Esophagus muscularis mucosa (tissue), 4 donors: ENCODE measurements at regions of chr11 and their contacts with region 1.

Region 1: GRCh38 chr11:3834664-3835461 is 5.9 kb downstream of the RHOG start:
- DNase-seq: no peak
- H3K4me3 ChIP-seq: no peak overlapping the region
- H3K27ac ChIP-seq: peak overlapping the region in 3 of 4 donors; percentile 2 to 48 (median 35)
- H3K4me1 ChIP-seq: peaks cover 77 to 91% (median 89%) of the 10 kb centered on the region in 4 donors
- H3K27me3 ChIP-seq: no peaks in the 10 kb centered on the region
- CTCF ChIP-seq: no peak
- EP300 ChIP-seq: no peak
- POLR2A ChIP-seq: no peak

Region 2: GRCh38 chr11:3797329-3798095 is 37.4 kb before region 1 on chr11 and contains the start of gene NUP98:
- intact Hi-C with region 1: loop called (anchors 5 kb)
- DNase-seq: peak; percentile 100
- H3K4me3 ChIP-seq: peak within 1 kb of the TSS; percentile 77 to 95 (median 90)
- H3K27ac ChIP-seq: peak within 1 kb of the TSS; percentile 93 to 99 (median 96)
- H3K4me1 ChIP-seq: peaks cover 15 to 46% (median 40%) of the 10 kb centered on the region in 4 donors
- H3K27me3 ChIP-seq: no peaks in the 10 kb centered on the region
- CTCF ChIP-seq: no peak
- EP300 ChIP-seq: no peak
- POLR2A ChIP-seq: peak; percentile 99
- total RNA-seq, gene NUP98: 67.7 to 117 (median 89.8) TPM